HEK293T (cell line): ENCODE measurements at regions of chr2 and their contacts with region 1.

Region 1: DNA sequence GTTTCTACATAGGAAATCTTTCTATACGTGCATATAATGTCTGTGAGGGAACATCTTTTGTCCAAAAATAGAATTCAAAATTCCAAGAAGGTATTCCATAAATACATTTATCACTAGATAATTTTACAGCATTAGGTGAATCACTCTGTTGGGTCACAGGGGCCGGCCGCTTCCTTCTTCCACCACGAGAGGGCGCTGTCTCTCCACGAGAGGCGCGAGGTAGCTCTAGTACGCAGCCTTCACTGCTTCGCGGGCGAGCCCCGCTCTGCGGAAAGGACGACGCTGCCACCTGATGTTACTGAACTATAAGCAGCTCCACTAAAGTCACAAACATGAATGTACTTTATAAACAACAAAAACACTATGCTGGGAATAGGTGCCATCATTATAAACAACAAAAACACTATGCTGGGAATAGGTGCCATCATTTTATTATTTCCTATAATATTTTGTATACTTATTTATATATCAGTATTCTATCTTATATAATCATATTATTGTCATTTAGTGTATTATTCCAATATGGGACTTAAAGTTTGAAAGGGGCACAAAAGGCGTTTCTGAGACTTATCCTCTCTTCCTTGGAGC is 69.4 kb upstream of the REV1 start:
- DNase-seq: peak; percentile 87

Region 2: DNA sequence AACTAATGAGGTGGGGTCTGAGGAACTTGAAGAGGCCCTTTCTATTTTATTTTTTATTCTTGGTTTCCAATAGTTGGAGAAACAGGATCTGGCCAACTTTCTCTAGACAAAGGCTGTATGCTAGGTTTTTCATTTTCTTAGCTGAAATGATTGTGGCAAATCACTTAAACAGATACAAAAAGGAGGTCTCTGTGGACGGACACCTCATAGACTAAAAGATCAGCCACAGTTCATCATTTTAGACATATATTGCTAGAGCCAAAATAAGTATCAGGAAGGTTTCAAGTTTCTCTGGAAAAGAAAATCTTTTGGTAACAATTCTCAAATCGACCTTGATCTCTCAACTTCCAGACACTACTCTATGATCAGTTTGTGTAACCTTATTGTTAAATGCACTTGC is 155.2 kb after region 1 on chr2:
- CTCF ChIA-PET with region 1: no interaction called
- POLR2A ChIA-PET with region 1: no interaction called
- DNase-seq: no peak

Region 3: GRCh38 chr2:100262555-100263320 is 703.6 kb after region 1 on chr2:
- CTCF ChIA-PET with region 1: interaction called, 24 read pairs
- POLR2A ChIA-PET with region 1: no interaction called
- DNase-seq: peak; percentile 79